Calu3 (cell line): ENCODE measurements at regions of chr5 and their contacts with region 1.

Region 1: DNA sequence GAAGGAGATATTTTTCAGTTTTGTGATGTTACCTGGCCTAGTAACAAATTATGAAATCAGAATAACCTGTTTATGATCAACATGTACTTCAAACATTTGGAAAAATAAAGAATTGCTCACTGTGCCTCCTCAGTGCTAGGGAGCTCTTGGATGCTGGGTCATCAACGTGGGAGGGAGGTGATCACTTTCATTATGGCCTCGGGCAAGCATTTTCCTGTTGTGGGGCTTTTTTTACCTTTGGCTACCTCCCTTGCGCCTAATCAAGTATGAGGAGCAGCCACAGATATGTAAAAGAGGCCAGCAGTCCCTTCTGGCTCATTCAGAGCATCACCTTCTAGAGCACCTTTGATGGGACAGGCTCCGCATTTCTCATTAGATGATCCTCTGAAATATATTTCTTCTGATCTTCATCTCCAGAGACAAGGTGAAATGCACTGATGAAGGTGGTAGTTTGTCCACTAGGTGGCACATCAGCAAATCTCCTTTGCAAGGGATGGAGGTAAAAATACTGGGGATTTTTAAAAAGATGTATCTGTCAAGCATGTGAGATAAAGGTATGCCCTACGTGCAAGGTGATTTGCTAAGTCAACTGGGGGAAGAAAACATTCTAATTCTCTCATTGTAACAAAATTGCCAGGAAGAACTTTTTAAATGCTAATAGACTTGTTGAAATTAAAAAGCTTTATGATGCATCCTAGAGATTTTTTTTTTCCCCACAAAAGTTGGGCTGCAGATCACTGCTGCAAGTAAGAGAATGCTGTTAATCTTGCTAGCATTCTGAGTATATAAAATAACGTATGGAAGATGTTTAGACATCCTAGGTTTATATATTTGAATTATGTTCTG is 218.2 kb downstream of the MAST4 start:
- DNase-seq: peak; percentile 54
- H3K4me3 Mint-ChIP-seq: no peak overlapping the region
- H3K27ac Mint-ChIP-seq: no peak overlapping the region
- H3K4me1 Mint-ChIP-seq: no peaks in the 10 kb centered on the region
- H3K27me3 Mint-ChIP-seq: no peaks in the 10 kb centered on the region
- CTCF ChIP-seq: peak; percentile 72

Region 2: DNA sequence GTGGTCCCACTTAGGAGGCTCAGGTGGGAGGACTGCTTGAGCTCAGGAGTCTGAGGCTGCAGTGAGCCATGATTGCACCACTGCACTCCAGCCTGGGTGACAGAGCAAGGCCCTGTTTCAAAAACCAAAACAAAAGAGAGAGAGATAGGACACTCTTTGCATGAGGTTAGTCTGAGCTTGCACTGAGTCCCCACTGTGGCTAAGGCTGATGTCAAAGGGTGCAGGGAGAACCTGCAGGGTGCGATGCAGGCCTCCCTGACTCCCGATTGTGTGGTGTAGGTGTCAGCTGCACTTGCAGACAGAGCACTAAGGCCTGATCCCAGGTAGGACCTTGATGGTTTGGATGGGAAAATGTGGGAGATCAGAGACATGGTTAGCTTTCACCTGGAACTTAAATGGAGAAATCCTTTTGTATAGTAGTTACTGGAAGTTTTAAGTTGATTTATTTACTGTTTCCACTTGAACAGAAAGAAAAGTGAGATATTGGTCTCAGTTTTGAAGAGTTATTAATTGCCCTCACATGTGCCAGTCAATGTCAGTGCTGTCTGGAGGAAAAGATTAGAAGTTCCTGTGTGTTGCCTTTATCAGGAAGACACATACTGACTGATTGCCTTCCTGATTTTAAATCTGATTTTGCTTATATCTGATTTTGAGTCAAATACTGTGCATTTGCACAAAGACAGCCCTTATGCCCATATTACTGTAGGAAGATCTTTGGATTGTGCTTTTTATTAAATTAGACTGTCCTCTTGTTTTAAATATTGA is 41.9 kb after region 1 on chr5:
- CTCF ChIA-PET with region 1: no interaction called
- intact Hi-C with region 1: loop called (anchors 5 kb)
- DNase-seq: no peak
- H3K4me3 Mint-ChIP-seq: no peak overlapping the region
- H3K27ac Mint-ChIP-seq: no peak overlapping the region
- H3K4me1 Mint-ChIP-seq: no peaks in the 10 kb centered on the region
- H3K27me3 Mint-ChIP-seq: no peaks in the 10 kb centered on the region
- CTCF ChIP-seq: no peak

Region 3: DNA sequence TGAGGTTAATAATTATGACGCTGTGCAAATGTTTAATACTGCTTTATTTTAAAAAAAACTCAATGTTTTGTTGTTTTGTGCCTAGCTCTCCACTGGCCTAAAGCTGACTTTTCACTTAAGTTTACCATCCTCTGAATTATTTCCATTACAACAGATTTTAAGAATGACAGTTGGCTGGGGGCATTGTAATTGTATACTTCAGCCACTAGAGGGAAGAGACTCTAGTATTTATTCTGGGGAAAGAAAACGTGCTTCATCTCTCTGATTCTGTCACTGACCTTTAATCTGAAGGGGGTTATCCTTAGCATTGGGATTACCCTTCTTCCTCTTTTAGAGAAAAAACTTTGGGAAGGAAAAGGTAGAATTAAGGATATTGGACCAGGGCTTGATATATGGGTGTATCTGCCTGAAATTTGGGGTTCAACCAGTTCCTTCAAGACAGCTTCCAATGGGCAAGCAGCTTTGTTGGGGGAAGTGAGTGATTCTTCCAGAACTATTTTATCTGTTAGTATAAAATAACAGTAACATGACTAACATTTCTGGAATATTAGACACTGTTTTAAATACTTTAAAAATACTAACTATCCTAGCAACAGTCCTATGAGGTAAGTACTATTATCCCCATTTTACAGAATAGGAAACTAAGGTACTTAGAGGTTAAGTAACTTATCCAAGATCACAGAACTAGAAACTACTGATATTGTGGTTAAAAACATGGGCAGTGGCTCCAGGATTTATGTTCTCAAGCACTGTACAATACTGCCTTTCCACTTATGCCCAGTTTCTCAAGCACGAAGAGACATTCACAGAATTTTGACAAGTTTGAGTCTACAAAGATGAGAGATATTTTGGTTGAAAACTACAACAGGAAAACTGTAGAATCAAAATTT is 173.8 kb after region 1 on chr5:
- CTCF ChIA-PET with region 1: no interaction called
- intact Hi-C with region 1: loop called (anchors 5 kb)
- DNase-seq: no peak
- H3K4me3 Mint-ChIP-seq: no peak overlapping the region
- H3K27ac Mint-ChIP-seq: no peak overlapping the region
- H3K4me1 Mint-ChIP-seq: no peaks in the 10 kb centered on the region
- H3K27me3 Mint-ChIP-seq: peaks cover 17% of the 10 kb centered on the region
- CTCF ChIP-seq: peak; percentile 77